ENCODE measurements at regions of chr7 and their contacts with region 1.

Region 1: GRCh38 chr7:5177060-5177459 is 13.0 kb upstream of the WIPI2 start:
- DNase-seq: peak; percentile 88
- H3K4me3 ChIP-seq: peak overlapping the region; percentile 1 to 4; a peak in 1 of 4 replicates
- H3K27ac ChIP-seq: no peak overlapping the region; a peak in 1 of 4 replicates
- H3K4me1 ChIP-seq: peaks cover 0 to 8% of the 10 kb centered on the region in 2 experiments; a peak in 1 of 4 replicates
- H3K27me3 ChIP-seq: no peaks in the 10 kb centered on the region
- CTCF ChIP-seq: no peak
- EP300 ChIP-seq: no peak
- RAD21 ChIP-seq: no peak

Region 2: GRCh38 chr7:5139998-5140397 is 37.1 kb before region 1 on chr7:
- CTCF ChIA-PET with region 1: interaction called, 51 read pairs
- POLR2A ChIA-PET with region 1: interaction called, 3 read pairs
- DNase-seq: peak; percentile 81
- H3K4me3 ChIP-seq: no peak overlapping the region
- H3K27ac ChIP-seq: no peak overlapping the region
- H3K4me1 ChIP-seq: no peaks in the 10 kb centered on the region
- H3K27me3 ChIP-seq: peaks cover 7% of the 10 kb centered on the region; the same call in 1 of the 2 replicates
- CTCF ChIP-seq: peak; percentile 62
- EP300 ChIP-seq: no peak
- RAD21 ChIP-seq: peak; percentile 70

Region 3: GRCh38 chr7:5193880-5194279 is 16.8 kb after region 1 on chr7:
- CTCF ChIA-PET with region 1: interaction called, 12 read pairs
- POLR2A ChIA-PET with region 1: interaction called, 12 read pairs
- DNase-seq: no peak
- H3K4me3 ChIP-seq: no peak overlapping the region
- H3K27ac ChIP-seq: no peak overlapping the region
- H3K4me1 ChIP-seq: peaks cover 9 to 10% of the 10 kb centered on the region in 2 experiments; a peak in 2 of 4 replicates
- H3K27me3 ChIP-seq: no peaks in the 10 kb centered on the region
- CTCF ChIP-seq: no peak
- EP300 ChIP-seq: no peak
- RAD21 ChIP-seq: no peak

Measured in SK-N-SH (cell line).